H1 (cell line): ENCODE measurements at regions of chr6 and their contacts with region 1.

Region 1: GRCh38 chr6:127186889-127187288 is 68.4 kb downstream of the RSPO3 start:
- DNase-seq: peak in 1 of 2 experiments; percentile 89
- H3K4me3 ChIP-seq: no peak overlapping the region
- H3K27ac ChIP-seq: no peak overlapping the region
- H3K4me1 ChIP-seq: no peaks in the 10 kb centered on the region
- H3K27me3 ChIP-seq: no peaks in the 10 kb centered on the region
- CTCF ChIP-seq: peak; percentile 63 to 82 (median 72)
- EP300 ChIP-seq: no peak
- POLR2A ChIP-seq: no peak
- RAD21 ChIP-seq: peak; percentile 52 to 59

Region 2: DNA sequence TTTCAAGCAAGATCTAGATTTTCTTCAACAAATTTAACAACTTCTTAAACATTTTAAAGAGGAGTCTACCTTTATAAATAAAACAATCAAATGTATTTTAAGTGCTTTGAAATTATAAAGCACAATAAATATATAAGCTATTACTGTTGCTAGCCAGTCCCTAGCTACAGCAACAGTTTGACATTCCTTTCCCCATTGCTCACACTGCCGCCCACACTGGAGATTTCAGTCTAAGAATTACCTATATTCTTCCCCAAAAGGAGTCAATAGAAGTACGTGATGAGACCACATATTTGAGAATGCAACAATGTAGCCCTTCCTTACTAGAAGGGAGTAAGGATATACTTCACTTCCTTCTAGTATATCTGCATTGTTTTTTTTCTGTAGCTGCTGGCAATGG is 14.4 kb after region 1 on chr6:
- CTCF ChIA-PET with region 1: interaction called, 13 read pairs
- POLR2A ChIA-PET with region 1: no interaction called
- DNase-seq: no peak
- H3K4me3 ChIP-seq: no peak overlapping the region
- H3K27ac ChIP-seq: no peak overlapping the region
- H3K4me1 ChIP-seq: no peaks in the 10 kb centered on the region
- H3K27me3 ChIP-seq: no peaks in the 10 kb centered on the region
- CTCF ChIP-seq: no peak
- EP300 ChIP-seq: no peak
- POLR2A ChIP-seq: no peak
- RAD21 ChIP-seq: no peak

Region 3: DNA sequence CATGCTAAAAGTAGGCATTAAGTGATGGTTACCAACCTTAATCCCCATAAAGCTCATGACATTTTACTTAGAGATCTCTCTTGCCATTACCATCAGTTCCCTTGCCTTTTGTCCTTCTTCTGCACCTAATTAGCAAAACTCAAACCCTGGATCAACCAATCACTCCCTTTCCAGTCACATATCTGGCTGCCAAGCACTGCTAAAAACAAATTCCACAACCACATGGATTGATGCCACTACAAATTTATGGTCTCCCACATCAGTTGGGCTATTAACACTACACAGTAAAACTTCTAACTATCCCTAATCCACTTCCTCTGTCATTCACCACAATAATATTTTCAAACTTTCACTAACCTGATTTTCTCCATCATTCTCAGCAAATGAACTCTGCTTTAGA is 25.5 kb after region 1 on chr6:
- CTCF ChIA-PET with region 1: interaction called, 15 read pairs
- POLR2A ChIA-PET with region 1: no interaction called
- DNase-seq: no peak
- H3K4me3 ChIP-seq: no peak overlapping the region
- H3K27ac ChIP-seq: no peak overlapping the region
- H3K4me1 ChIP-seq: no peaks in the 10 kb centered on the region
- H3K27me3 ChIP-seq: no peaks in the 10 kb centered on the region
- CTCF ChIP-seq: no peak
- EP300 ChIP-seq: no peak
- POLR2A ChIP-seq: no peak
- RAD21 ChIP-seq: no peak

Region 4: DNA sequence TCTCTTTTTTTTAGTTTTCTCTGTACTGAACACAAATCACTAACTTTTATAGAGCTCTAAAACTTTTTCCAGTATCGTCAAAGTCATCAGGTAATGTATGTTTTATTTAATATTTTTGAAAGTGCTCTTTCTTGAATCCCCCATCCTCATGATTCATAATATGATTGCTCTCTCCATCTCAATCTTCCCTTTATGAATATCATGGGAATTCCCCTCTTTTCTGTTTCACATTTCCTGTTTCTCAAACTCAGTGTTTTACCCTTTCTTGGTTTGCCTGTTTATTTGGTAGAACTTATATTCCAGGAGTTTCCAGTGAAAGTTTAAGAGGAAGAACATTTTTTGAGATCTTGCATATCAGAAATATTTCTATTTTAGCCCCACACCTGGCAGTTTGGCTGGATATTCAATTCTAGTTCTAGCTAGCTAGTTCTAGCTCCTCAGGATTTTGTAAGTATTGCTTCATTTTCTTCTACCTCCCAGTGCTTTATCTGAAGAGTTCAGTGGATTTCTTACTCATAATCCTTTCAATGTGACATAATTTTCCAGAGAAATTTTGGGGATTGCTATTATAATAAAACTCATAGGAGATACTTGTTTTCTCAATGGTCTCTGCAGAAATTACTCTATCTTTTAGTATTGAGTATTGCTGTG is 384.0 kb after region 1 on chr6:
- CTCF ChIA-PET with region 1: no interaction called
- POLR2A ChIA-PET with region 1: no interaction called
- DNase-seq: no peak
- H3K4me3 ChIP-seq: no peak overlapping the region
- H3K27ac ChIP-seq: no peak overlapping the region
- H3K4me1 ChIP-seq: no peaks in the 10 kb centered on the region
- H3K27me3 ChIP-seq: no peaks in the 10 kb centered on the region
- CTCF ChIP-seq: no peak
- EP300 ChIP-seq: no peak
- POLR2A ChIP-seq: no peak
- RAD21 ChIP-seq: no peak